B cell (primary cell): ENCODE measurements at regions of chr14 and their contacts with region 1.

Region 1: GRCh38 chr14:101947906-101948665 is 16.3 kb upstream of the DYNC1H1 start:
- DNase-seq: peak; percentile 100
- ATAC-seq: peak; percentile 96
- H3K4me3 ChIP-seq: peak overlapping the region; percentile 80 to 99 (median 91)
- H3K4me3 Mint-ChIP-seq: peak overlapping the region; percentile 97
- H3K27ac ChIP-seq: peak overlapping the region; percentile 97 to 99
- H3K27ac Mint-ChIP-seq: peak overlapping the region; percentile 99
- H3K4me1 ChIP-seq: peaks cover 10 to 18% of the 10 kb centered on the region in 2 donors
- H3K4me1 Mint-ChIP-seq: peaks cover 23% of the 10 kb centered on the region
- H3K27me3 ChIP-seq: peaks cover 0 to 13% (median 2%) of the 10 kb centered on the region in 4 experiments
- H3K27me3 Mint-ChIP-seq: peaks cover 25% of the 10 kb centered on the region
- CTCF ChIP-seq: no peak

Region 2: GRCh38 chr14:101809671-101810514 is 138.2 kb before region 1 on chr14:
- CTCF ChIA-PET with region 1: interaction called, 3 read pairs
- POLR2A ChIA-PET with region 1: interaction called, 6 read pairs
- intact Hi-C with region 1: loop called (anchors 1 kb)
- DNase-seq: peak; percentile 93
- ATAC-seq: peak; percentile 93
- H3K4me3 ChIP-seq: peak overlapping the region; percentile 80 to 100 (median 97)
- H3K4me3 Mint-ChIP-seq: peak overlapping the region; percentile 92
- H3K27ac ChIP-seq: peak overlapping the region; percentile 95 to 100
- H3K27ac Mint-ChIP-seq: peak overlapping the region; percentile 98
- H3K4me1 ChIP-seq: peaks cover 39 to 43% of the 10 kb centered on the region in 2 donors
- H3K4me1 Mint-ChIP-seq: peaks cover 45% of the 10 kb centered on the region
- H3K27me3 ChIP-seq: no peaks in the 10 kb centered on the region
- H3K27me3 Mint-ChIP-seq: no peaks in the 10 kb centered on the region
- CTCF ChIP-seq: no peak

Region 3: DNA sequence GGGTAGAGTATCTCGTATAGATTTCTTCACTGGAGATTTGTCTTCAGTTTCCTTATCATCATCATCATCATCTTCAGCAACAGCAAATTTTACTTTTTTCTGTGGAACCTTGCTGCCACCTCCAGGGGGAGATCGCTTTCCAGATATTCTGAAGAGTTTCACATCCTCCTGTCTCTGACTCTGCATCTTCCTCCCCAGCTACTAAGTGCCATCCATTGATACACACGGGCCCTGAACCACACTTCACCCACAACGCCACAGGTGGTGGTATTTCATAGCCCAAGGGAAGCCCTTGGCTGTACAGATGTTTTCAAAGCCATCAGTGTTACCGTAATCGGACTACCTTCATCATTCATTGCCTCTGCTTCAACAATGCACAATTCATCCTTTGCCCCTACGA is 104.4 kb before region 1 on chr14:
- CTCF ChIA-PET with region 1: interaction called, 7 read pairs
- POLR2A ChIA-PET with region 1: interaction called, 6 read pairs
- intact Hi-C with region 1: loop called (anchors 1 kb)
- DNase-seq: peak; percentile 94
- ATAC-seq: peak; percentile 87
- H3K4me3 ChIP-seq: peak overlapping the region in 1 of 5 experiments; percentile 4
- H3K4me3 Mint-ChIP-seq: peak overlapping the region; percentile 67
- H3K27ac ChIP-seq: peak overlapping the region; percentile 37 to 75
- H3K27ac Mint-ChIP-seq: peak overlapping the region; percentile 81
- H3K4me1 ChIP-seq: peaks cover 49 to 51% of the 10 kb centered on the region in 2 donors
- H3K4me1 Mint-ChIP-seq: peaks cover 79% of the 10 kb centered on the region
- H3K27me3 ChIP-seq: no peaks in the 10 kb centered on the region
- H3K27me3 Mint-ChIP-seq: no peaks in the 10 kb centered on the region
- CTCF ChIP-seq: peak; percentile 87

Region 4: DNA sequence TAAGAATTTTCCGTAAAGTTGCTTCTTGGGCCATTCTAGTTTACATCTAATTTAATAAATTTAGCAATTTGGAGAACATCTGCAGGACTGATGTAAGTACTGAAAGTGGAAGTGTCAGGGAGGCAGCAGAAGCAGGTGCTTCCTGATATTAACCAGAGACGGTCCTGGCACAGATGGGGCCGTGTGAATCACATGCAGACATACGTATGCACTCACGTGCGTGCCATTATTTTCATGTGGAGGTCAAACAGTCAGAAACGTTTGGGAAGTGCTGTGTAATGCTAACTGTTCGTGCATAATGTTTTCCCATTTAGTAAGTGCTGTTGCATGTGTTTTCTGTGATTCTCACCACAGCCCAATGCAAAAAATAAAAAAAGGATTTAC is 71.5 kb before region 1 on chr14:
- CTCF ChIA-PET with region 1: no interaction called
- POLR2A ChIA-PET with region 1: interaction called, 10 read pairs
- intact Hi-C with region 1: loop called (anchors 1 kb)
- DNase-seq: peak; percentile 96
- ATAC-seq: peak; percentile 89
- H3K4me3 ChIP-seq: peak overlapping the region in 4 of 5 experiments; percentile 8 to 57 (median 29)
- H3K4me3 Mint-ChIP-seq: peak overlapping the region; percentile 71
- H3K27ac ChIP-seq: peak overlapping the region; percentile 94 to 96
- H3K27ac Mint-ChIP-seq: peak overlapping the region; percentile 72
- H3K4me1 ChIP-seq: peaks cover 52 to 58% of the 10 kb centered on the region in 2 donors
- H3K4me1 Mint-ChIP-seq: peaks cover 79% of the 10 kb centered on the region
- H3K27me3 ChIP-seq: no peaks in the 10 kb centered on the region
- H3K27me3 Mint-ChIP-seq: no peaks in the 10 kb centered on the region
- CTCF ChIP-seq: no peak

Region 5: DNA sequence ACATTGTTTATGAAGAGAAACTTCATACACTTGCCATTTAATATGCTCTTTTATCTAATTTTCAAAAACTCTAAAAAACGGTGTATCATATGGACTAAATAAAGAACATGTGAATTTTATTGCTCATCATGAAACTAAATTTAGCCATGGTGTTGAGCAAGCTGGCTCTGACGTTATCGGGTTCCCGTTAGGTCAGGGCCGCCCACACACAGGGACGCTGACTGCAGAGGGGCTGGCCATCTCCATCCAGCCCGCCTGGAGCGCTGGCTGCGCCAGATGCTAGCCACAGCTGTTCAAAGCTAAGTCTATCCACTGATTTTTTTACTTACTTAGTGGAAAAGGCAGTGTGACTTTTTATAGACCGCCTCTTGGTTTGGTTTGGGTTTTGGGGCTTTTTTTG is 20.2 kb before region 1 on chr14:
- CTCF ChIA-PET with region 1: no interaction called
- POLR2A ChIA-PET with region 1: no interaction called
- intact Hi-C with region 1: no loop called
- DNase-seq: no peak
- ATAC-seq: no peak
- H3K4me3 ChIP-seq: no peak overlapping the region
- H3K4me3 Mint-ChIP-seq: no peak overlapping the region
- H3K27ac ChIP-seq: no peak overlapping the region
- H3K27ac Mint-ChIP-seq: no peak overlapping the region
- H3K4me1 ChIP-seq: no peaks in the 10 kb centered on the region
- H3K4me1 Mint-ChIP-seq: no peaks in the 10 kb centered on the region
- H3K27me3 ChIP-seq: no peaks in the 10 kb centered on the region
- H3K27me3 Mint-ChIP-seq: no peaks in the 10 kb centered on the region
- CTCF ChIP-seq: no peak

Region 6: GRCh38 chr14:102304611-102305509 is 356.8 kb after region 1 on chr14 and contains the start of gene MOK:
- CTCF ChIA-PET with region 1: no interaction called
- POLR2A ChIA-PET with region 1: no interaction called
- intact Hi-C with region 1: loop called (anchors 1 kb)
- DNase-seq: peak; percentile 98
- ATAC-seq: peak; percentile 90
- H3K4me3 ChIP-seq: peak within 1 kb of the TSS; percentile 80 to 82 (median 81)
- H3K4me3 Mint-ChIP-seq: peak within 1 kb of the TSS; percentile 94
- H3K27ac ChIP-seq: peak within 1 kb of the TSS; percentile 72 to 89
- H3K27ac Mint-ChIP-seq: peak within 1 kb of the TSS; percentile 96
- H3K4me1 ChIP-seq: peaks cover 5 to 11% of the 10 kb centered on the region in 2 donors
- H3K4me1 Mint-ChIP-seq: peaks cover 6% of the 10 kb centered on the region
- H3K27me3 ChIP-seq: no peaks in the 10 kb centered on the region
- H3K27me3 Mint-ChIP-seq: no peaks in the 10 kb centered on the region
- CTCF ChIP-seq: no peak
- total RNA-seq, gene MOK: 2.9 and 3.0 TPM in 2 replicates